ENCODE measurements at regions of chr19 and their contacts with region 1.

Region 1: GRCh38 chr19:12610540-12611360 is at the starts of genes ZNF490 and ZNF791:
- DNase-seq: peak; percentile 98
- H3K4me3 Mint-ChIP-seq: peak within 1 kb of the TSS; percentile 100
- H3K27ac Mint-ChIP-seq: peak within 1 kb of the TSS; percentile 99
- H3K4me1 Mint-ChIP-seq: peaks cover 48% of the 10 kb centered on the region
- H3K27me3 Mint-ChIP-seq: no peaks in the 10 kb centered on the region
- total RNA-seq, gene ZNF490: 16.9 to 17.1 TPM
- total RNA-seq, gene ZNF791: 39.9 to 44.3 TPM

Region 2: GRCh38 chr19:12580163-12580694 is 30.5 kb before region 1 on chr19:
- CTCF ChIA-PET with region 1: no interaction called
- POLR2A ChIA-PET with region 1: no interaction called
- DNase-seq: no peak
- H3K4me3 Mint-ChIP-seq: no peak overlapping the region
- H3K27ac Mint-ChIP-seq: no peak overlapping the region
- H3K4me1 Mint-ChIP-seq: no peaks in the 10 kb centered on the region
- H3K27me3 Mint-ChIP-seq: no peaks in the 10 kb centered on the region

Region 3: GRCh38 chr19:12639901-12640613 is 29.3 kb after region 1 on chr19:
- CTCF ChIA-PET with region 1: interaction called, 8 read pairs
- POLR2A ChIA-PET with region 1: interaction called, 13 read pairs
- DNase-seq: peak; percentile 87
- H3K4me3 Mint-ChIP-seq: peak overlapping the region; percentile 58
- H3K27ac Mint-ChIP-seq: peak overlapping the region; percentile 33
- H3K4me1 Mint-ChIP-seq: peaks cover 15% of the 10 kb centered on the region
- H3K27me3 Mint-ChIP-seq: no peaks in the 10 kb centered on the region

Region 4: DNA sequence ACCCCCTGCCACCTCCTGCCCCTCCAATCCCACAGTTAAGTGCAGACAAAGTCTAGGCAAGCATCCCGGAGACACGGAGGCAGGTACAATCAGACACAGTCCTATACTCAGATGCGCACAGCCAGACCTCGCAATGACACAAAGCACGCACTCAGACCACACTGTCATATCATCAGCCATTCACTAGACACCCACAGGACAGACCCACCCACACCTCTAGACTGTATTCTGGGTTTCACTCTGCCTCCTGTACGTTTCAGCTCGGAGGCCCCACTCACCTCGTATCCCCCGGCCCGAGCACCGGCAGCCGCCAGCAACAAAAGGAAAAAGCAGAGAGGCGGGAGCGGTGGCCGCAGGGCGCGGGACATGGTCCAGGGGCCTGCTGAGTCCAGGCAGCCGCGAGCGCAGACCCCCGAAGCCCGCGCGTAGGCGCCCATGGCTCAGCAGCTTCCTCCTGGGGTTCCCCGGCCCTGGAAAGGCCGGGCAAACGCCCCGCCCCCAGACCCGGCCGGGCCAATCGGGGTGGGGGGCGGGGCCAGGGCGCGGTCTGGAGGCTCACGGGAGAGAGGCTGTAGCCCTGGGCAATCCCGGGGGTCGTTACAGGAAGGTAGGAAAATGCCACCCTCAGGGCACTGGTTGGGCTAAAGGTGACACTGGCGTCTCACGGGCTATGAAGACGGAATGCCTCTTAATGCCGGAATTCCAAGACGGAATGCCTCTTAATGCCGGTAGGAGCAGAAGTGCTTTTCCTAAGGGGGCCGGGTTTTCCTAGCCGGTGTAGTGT is 55.7 kb after region 1 on chr19 and contains the starts of genes MAN2B1 and WDR83:
- CTCF ChIA-PET with region 1: interaction called, 4 read pairs
- POLR2A ChIA-PET with region 1: interaction called, 37 read pairs
- DNase-seq: peak; percentile 80
- H3K4me3 Mint-ChIP-seq: peak within 1 kb of the TSS; percentile 92
- H3K27ac Mint-ChIP-seq: peak within 1 kb of the TSS; percentile 97
- H3K4me1 Mint-ChIP-seq: peaks cover 64% of the 10 kb centered on the region
- H3K27me3 Mint-ChIP-seq: no peaks in the 10 kb centered on the region
- total RNA-seq, gene MAN2B1: 146 to 150 TPM
- total RNA-seq, gene WDR83: 16.9 to 21.3 TPM

Measured in activated CD4-positive, alpha-beta memory T cell treated with anti-CD3 and anti-CD28 coated beads, Interleukin-2, amount 10 ng/mL, durations not matched to agents 7 days and 5 days (primary cell).